SK-N-SH (cell line): ENCODE measurements at regions of chr7 and their contacts with region 1.

Region 1: DNA sequence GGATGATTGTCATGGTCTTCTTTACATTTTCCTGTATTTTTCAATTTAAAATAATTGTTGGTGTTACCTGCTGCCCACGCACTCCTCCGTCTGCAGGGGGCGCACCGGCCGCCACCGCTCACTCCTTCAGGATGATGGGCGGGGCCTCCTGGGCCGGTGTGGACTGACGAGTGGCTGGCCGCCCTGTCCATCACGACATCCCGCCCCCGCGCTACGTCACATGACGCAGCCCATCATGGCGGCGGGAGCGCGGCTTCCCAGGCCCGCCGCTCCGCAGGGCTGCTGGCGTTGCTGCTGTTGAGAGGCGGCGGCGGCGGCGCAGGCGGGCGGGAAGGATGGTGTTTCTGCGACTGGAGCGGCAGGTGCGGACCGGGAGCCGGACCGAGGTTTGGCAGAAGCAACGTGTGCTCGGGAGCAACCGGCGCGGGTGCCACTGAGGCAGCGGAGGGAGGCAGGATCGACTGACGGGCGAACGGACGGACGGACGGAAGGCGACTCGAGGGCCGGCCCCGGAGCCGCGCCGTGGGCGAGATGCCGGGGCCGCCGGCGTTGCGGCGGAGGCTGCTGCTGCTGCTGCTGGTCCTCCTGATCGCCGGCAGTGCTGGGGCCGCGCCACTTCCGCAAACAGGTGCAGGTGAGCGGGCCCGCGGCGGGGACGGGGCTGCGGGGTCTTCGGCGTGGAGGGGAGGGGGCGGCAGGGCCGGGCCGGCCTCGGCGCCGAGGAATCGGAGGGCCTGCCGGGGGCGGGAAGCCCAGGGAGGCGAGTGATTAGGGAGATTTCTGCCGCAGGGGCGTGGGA is at the start of gene LMTK2:
- DNase-seq: peak; percentile 100
- H3K4me3 ChIP-seq: peak within 1 kb of the TSS; percentile 87 to 99
- H3K27ac ChIP-seq: peak within 1 kb of the TSS; percentile 64 to 75; a peak in 3 of 4 replicates
- H3K4me1 ChIP-seq: peaks cover 9 to 12% of the 10 kb centered on the region in 2 experiments; a peak in 3 of 4 replicates
- H3K27me3 ChIP-seq: no peaks in the 10 kb centered on the region
- CTCF ChIP-seq: peak; percentile 100
- EP300 ChIP-seq: no peak; a peak in 1 of 4 replicates
- RAD21 ChIP-seq: peak; percentile 76
- polyA plus RNA-seq, gene LMTK2: 6.8 and 9.0 TPM in 2 replicates

Region 2: GRCh38 chr7:98014352-98014751 is 92.5 kb before region 1 on chr7:
- CTCF ChIA-PET with region 1: interaction called, 10 read pairs
- POLR2A ChIA-PET with region 1: no interaction called
- DNase-seq: no peak
- H3K4me3 ChIP-seq: no peak overlapping the region
- H3K27ac ChIP-seq: no peak overlapping the region
- H3K4me1 ChIP-seq: no peaks in the 10 kb centered on the region
- H3K27me3 ChIP-seq: peaks cover 11% of the 10 kb centered on the region; the same call in 1 of the 2 replicates
- CTCF ChIP-seq: no peak
- EP300 ChIP-seq: no peak
- RAD21 ChIP-seq: peak; percentile 26; the same call in 1 of the 2 replicates

Region 3: DNA sequence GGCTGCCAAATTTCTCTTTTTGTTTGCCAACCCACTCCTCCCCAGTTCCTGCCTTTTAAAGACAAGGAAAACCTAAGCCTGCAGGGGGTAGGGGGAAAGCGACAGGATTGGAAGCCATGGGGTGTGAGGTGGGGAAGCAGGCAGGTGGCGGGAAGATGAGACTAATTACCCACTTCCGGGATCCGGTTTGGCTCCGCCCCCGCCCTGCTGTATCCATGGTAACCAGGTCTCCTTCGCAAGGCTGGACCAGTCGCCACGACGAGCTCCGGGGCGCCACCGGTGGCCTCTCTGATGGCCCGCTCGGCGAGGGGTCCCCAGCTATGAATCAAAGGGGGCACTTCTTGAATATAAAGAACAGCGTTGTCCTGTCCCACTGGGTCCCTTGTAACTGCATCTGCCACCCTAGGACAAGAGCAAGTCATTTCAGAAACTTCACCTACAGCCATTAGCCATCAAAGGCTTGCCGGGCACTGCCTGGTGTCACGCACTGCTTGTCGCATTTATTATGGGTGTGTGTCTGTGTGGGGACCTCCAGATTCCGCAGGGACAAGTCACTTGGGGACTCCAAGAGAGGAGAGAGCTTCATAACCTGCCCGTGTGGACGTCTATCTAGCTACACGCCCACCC is 55.6 kb before region 1 on chr7:
- CTCF ChIA-PET with region 1: no interaction called
- POLR2A ChIA-PET with region 1: no interaction called
- DNase-seq: peak; percentile 81
- H3K4me3 ChIP-seq: no peak overlapping the region; a peak in 1 of 4 replicates
- H3K27ac ChIP-seq: no peak overlapping the region
- H3K4me1 ChIP-seq: no peaks in the 10 kb centered on the region; a peak in 1 of 4 replicates
- H3K27me3 ChIP-seq: peaks cover 6% of the 10 kb centered on the region; the same call in 1 of the 2 replicates
- CTCF ChIP-seq: no peak
- EP300 ChIP-seq: no peak
- RAD21 ChIP-seq: no peak

Region 4: DNA sequence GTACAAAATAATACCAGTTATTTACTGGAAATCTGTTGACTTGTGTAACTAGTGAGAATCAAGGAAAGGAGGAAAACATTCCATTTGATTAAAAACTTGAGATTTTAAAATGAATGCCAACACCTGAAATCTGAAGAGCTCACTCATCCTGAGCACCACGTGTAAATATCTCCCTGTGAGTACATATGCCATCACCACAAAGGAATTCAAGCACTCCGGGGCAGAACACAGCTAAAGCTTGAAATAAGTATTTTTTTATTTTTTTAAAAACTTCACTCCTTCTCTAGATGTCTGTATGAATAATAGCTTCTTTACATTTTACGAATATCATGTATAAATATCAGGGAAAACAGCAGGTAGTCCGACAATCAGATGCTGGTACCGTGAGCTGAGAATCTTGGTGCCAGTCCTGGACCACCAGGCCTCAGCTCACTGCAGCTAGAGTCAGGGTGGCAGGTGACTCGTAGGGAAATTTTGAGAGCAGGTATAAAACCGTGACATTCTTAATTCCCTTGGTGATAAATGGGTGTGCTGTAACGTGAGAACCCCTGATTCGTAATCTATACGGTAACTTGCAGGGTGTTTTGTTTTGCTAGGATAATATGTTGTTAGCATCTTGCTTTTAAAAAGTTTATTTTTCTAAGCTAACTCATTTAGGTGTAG is 12.5 kb after region 1 on chr7:
- CTCF ChIA-PET with region 1: interaction called, 16 read pairs
- POLR2A ChIA-PET with region 1: interaction called, 4 read pairs
- DNase-seq: no peak
- H3K4me3 ChIP-seq: no peak overlapping the region
- H3K27ac ChIP-seq: peak overlapping the region in 1 of 2 experiments; percentile 54; a peak in 2 of 4 replicates
- H3K4me1 ChIP-seq: peaks cover 10 to 18% of the 10 kb centered on the region in 2 experiments; a peak in 3 of 4 replicates
- H3K27me3 ChIP-seq: no peaks in the 10 kb centered on the region
- CTCF ChIP-seq: no peak
- EP300 ChIP-seq: peak in 1 of 2 experiments; percentile 44; a peak in 1 of 4 replicates
- RAD21 ChIP-seq: no peak

Region 5: DNA sequence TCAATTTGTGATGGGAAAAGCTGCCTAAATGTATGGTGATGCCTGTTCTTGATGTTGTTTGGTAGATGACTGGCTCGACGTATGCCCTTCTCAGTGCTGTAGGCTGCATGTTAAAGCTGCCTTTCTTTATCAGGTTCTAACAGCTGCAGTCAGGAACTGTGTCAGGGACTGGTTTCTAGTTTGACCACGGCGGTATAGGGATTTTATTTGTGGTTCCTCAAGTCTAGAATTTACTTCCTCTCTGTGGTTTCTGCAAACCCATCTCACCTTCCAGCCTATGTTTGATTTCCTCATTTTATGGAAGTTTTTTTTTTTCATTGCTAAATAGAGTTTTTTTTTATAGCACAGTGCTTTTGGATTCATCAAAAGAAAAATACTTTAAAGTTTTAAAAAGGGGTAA is 26.3 kb after region 1 on chr7:
- CTCF ChIA-PET with region 1: interaction called, 12 read pairs
- POLR2A ChIA-PET with region 1: no interaction called
- DNase-seq: no peak
- H3K4me3 ChIP-seq: no peak overlapping the region
- H3K27ac ChIP-seq: no peak overlapping the region
- H3K4me1 ChIP-seq: peaks cover 20 to 23% of the 10 kb centered on the region in 2 experiments; a peak in 3 of 4 replicates
- H3K27me3 ChIP-seq: no peaks in the 10 kb centered on the region
- CTCF ChIP-seq: no peak
- EP300 ChIP-seq: no peak
- RAD21 ChIP-seq: no peak

Region 6: GRCh38 chr7:98142658-98143057 is 35.8 kb after region 1 on chr7:
- CTCF ChIA-PET with region 1: interaction called, 12 read pairs
- POLR2A ChIA-PET with region 1: no interaction called
- DNase-seq: no peak
- H3K4me3 ChIP-seq: no peak overlapping the region
- H3K27ac ChIP-seq: no peak overlapping the region
- H3K4me1 ChIP-seq: no peaks in the 10 kb centered on the region
- H3K27me3 ChIP-seq: no peaks in the 10 kb centered on the region
- CTCF ChIP-seq: no peak
- EP300 ChIP-seq: no peak
- RAD21 ChIP-seq: no peak

Region 7: GRCh38 chr7:98284335-98285036 is 177.6 kb after region 1 on chr7:
- CTCF ChIA-PET with region 1: no interaction called
- POLR2A ChIA-PET with region 1: no interaction called
- DNase-seq: peak; percentile 74
- H3K4me3 ChIP-seq: peak overlapping the region; percentile 80 to 92
- H3K27ac ChIP-seq: peak overlapping the region; percentile 53 to 75
- H3K4me1 ChIP-seq: peaks cover 35 to 53% of the 10 kb centered on the region in 2 experiments; a peak in 3 of 4 replicates
- H3K27me3 ChIP-seq: no peaks in the 10 kb centered on the region
- CTCF ChIP-seq: no peak
- EP300 ChIP-seq: peak in 1 of 2 experiments; percentile 24; a peak in 1 of 4 replicates
- RAD21 ChIP-seq: no peak